ENCODE measurements at regions of chr2 and their contacts with region 1.

Region 1: GRCh38 chr2:240513549-240514287 is 44.1 kb downstream of the ANKMY1 start:
- H3K4me3 ChIP-seq: no peak overlapping the region
- H3K27ac ChIP-seq: no peak overlapping the region
- H3K4me1 ChIP-seq: no peaks in the 10 kb centered on the region
- CTCF ChIP-seq: peak; percentile 67

Region 2: GRCh38 chr2:240499309-240500301 is 14.1 kb before region 1 on chr2:
- CTCF ChIA-PET with region 1: interaction called, 11 read pairs
- POLR2A ChIA-PET with region 1: no interaction called
- H3K4me3 ChIP-seq: no peak overlapping the region
- H3K27ac ChIP-seq: no peak overlapping the region
- H3K4me1 ChIP-seq: no peaks in the 10 kb centered on the region
- CTCF ChIP-seq: no peak

Region 3: DNA sequence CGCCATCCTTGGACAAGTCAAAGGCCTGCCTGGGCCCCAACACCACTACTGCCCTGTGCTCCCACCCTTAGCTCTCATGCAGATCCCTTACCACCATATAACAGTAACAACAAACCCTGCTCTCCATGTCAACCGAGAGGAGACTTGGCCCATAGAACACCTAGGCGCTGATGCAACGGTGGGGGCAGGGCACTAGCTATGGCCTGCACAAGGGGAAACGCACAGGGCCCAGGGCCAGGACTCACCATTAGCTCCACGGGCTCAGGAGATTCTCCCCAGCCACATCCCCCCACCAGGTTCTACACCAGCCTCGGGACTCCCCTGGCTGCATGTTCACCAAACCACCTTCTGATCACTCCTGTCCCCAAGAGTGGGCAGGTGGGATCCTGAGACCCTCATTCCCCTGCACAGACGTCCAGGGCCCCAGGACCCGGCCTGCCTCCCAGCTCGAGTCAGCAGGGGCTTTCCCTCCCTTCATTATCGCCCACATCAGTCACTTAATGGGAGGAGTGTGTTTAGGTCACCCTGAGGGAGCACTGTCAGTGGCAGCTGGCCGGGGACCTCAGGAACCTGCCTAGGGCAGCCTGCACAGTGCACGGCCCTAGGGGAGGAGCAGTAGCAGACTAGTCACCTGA is 14.8 kb after region 1 on chr2:
- CTCF ChIA-PET with region 1: interaction called, 10 read pairs
- POLR2A ChIA-PET with region 1: no interaction called
- H3K4me3 ChIP-seq: no peak overlapping the region
- H3K27ac ChIP-seq: no peak overlapping the region
- H3K4me1 ChIP-seq: no peaks in the 10 kb centered on the region
- CTCF ChIP-seq: no peak

Measured in HEK293 (cell line).